ENCODE measurements at regions of chr5 and their contacts with region 1.

Region 1: GRCh38 chr5:151239237-151239861 is 13.6 kb upstream of the GM2A start:
- DNase-seq: peak; percentile 83 to 87
- ATAC-seq: peak; percentile 48 to 89 (median 72)
- H3K4me3 ChIP-seq: peak overlapping the region in 7 of 10 donors; percentile 8 to 41 (median 37)
- H3K27ac ChIP-seq: peak overlapping the region in 9 of 10 donors; percentile 69 to 93 (median 84)
- H3K4me1 ChIP-seq: peaks cover 9 to 41% (median 33%) of the 10 kb centered on the region in 9 donors
- H3K27me3 ChIP-seq: no peaks in the 10 kb centered on the region
- CTCF ChIP-seq: peak; percentile 79 to 95 (median 93)

Region 2: DNA sequence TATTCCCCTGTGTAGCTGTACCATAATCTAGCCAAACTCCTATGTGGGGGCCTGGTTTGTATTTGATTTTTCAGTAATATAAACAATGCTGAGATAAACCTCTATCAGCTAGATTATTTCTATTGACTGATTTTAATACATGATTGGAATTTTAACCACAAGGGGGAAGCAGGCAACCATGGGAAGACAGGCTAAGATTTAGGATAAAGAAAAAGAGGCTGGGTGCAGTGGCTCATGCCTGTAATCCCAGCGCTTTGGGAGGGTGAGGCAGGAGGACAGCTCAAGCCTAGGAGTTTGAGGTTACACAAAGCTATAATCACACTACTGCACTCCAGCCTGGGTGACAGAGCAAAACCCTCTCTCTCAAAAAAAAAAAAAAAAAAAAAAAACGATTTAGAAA is 237.1 kb before region 1 on chr5:
- intact Hi-C with region 1: loop called in 2 of 10 experiments (anchors 5 kb)
- DNase-seq: peak in 1 of 2 donors; percentile 38
- ATAC-seq: peak in 1 of 8 donors; percentile 41
- H3K4me3 ChIP-seq: no peak overlapping the region
- H3K27ac ChIP-seq: no peak overlapping the region
- H3K4me1 ChIP-seq: peaks cover 16 to 42% (median 34%) of the 10 kb centered on the region in 9 donors
- H3K27me3 ChIP-seq: no peaks in the 10 kb centered on the region
- CTCF ChIP-seq: peak; percentile 44 to 75 (median 66)

Region 3: GRCh38 chr5:151063142-151063949 is 176.0 kb before region 1 on chr5:
- intact Hi-C with region 1: loop called in 2 of 10 experiments (anchors 5 to 10 kb)
- DNase-seq: peak in 1 of 2 donors; percentile 60
- ATAC-seq: peak; percentile 53 to 81 (median 74)
- H3K4me3 ChIP-seq: peak overlapping the region in 1 of 10 donors; percentile 3
- H3K27ac ChIP-seq: peak overlapping the region; percentile 78 to 93 (median 88)
- H3K4me1 ChIP-seq: peaks cover 44 to 98% (median 94%) of the 10 kb centered on the region in 9 donors
- H3K27me3 ChIP-seq: no peaks in the 10 kb centered on the region
- CTCF ChIP-seq: no peak

Region 4: DNA sequence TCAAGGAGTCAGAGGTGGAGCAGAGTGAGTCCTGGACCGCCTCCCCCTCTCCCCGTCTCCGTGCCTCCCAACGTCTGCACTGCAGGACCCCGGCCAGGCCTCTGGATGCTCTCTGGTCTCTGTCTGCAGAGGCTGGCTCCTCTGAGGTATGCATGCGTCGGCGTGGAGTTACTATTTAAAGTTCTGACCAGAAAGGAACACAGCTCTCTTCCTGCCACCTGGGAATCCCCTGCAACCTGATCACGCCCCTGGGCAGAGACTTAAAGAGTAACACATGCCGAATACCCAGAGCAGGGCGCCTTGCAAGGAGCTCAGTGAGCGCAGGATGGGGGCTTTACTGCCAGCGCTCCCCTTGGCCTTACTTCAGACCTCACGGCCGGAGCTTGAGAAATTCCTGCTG is 97.8 kb before region 1 on chr5:
- intact Hi-C with region 1: loop called in 1 of 10 experiments (anchors 10 kb)
- DNase-seq: peak in 1 of 2 donors; percentile 53
- ATAC-seq: peak; percentile 70 to 94 (median 82)
- H3K4me3 ChIP-seq: peak overlapping the region in 3 of 10 donors; percentile 0 to 18 (median 14)
- H3K27ac ChIP-seq: peak overlapping the region in 9 of 10 donors; percentile 50 to 81 (median 77)
- H3K4me1 ChIP-seq: peaks cover 19 to 72% (median 63%) of the 10 kb centered on the region in 9 donors
- H3K27me3 ChIP-seq: no peaks in the 10 kb centered on the region
- CTCF ChIP-seq: no peak

Region 5: DNA sequence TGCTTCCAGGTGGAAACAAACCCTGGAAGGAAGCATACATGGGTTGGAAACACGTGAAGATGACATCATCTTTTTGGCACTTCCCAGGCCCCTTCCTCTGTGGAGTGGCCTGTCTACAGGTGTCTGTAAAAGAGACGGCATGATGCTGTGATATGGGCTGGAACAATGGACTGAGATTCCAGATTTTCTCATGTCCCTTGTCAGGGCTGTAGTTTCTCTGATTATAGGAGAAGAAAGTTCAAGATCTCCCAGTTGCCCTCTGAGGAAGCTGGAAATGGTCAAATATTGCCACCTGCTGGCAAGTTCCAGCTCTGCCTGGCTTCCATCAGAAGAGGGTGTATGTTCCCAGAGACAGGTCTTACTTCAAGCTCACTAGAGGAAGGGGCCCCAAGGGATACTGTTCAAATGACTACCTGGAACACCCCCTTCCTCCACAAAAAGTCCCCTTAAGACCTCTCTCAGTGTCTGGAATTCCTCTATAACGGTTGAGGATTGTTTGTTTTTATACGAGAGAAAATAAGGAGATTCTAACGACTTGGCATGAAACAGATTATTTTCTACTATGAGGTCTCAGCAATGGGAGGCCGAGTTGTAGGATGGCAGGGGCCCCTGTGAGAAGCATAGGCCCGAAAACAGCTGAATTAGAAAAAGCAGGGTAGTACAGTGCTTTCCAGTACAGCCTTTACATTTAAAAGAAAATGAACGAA is 74.5 kb before region 1 on chr5:
- intact Hi-C with region 1: loop called in 7 of 10 experiments (anchors 2 to 10 kb)
- DNase-seq: peak; percentile 61 to 84
- ATAC-seq: peak; percentile 82 to 94 (median 91)
- H3K4me3 ChIP-seq: no peak overlapping the region
- H3K27ac ChIP-seq: peak overlapping the region in 3 of 10 donors; percentile 3 to 12 (median 9)
- H3K4me1 ChIP-seq: peaks cover 3 to 21% (median 13%) of the 10 kb centered on the region in 9 donors
- H3K27me3 ChIP-seq: no peaks in the 10 kb centered on the region
- CTCF ChIP-seq: peak; percentile 79 to 99 (median 90)

Region 6: DNA sequence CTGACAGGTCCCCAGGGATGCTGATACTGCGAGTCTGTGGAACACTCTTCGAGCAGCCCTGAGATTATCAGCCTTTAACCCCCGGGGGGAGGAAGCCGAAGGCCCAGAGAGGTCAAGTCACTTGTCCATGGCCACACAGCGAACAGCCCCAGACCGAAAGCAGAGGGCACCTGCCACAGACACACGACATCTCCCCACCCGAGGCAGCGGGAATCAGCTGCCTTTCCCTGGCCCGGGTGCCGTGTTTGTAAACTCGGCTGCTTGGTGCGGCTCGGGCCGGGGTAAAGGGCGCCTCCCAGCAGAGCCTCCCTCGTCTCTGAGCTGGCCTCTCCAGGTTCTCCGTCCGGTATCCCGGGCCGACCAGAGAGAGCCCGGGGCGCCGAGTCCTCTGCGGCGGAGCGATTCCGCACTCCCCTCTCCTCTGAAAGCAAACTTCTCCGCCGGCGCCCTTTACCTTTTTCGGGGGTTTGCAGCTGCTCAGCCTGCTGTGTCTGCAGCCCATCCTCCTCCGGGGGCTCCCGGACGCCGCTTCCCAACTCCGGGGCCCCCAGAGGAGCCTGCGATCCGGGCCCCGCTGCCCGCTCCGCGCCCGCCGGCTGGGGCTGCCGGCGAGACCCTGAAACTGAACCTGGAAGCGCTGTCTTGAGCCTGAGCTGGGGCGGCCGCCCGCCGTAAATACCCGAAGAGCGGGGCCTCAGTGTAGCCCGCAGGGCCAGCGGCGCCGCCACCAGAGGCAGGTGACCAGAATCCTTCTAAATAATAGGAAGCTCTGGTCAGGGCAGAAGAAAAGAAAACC is 15.7 kb before region 1 on chr5 and contains the start of gene CCDC69:
- intact Hi-C with region 1: loop called in 1 of 10 experiments (anchors 2 kb)
- DNase-seq: peak; percentile 80 to 81
- ATAC-seq: peak; percentile 89 to 93 (median 92)
- H3K4me3 ChIP-seq: peak within 1 kb of the TSS; percentile 69 to 98 (median 90)
- H3K27ac ChIP-seq: peak within 1 kb of the TSS; percentile 79 to 97 (median 94)
- H3K4me1 ChIP-seq: peaks cover 13 to 60% (median 48%) of the 10 kb centered on the region in 9 donors
- H3K27me3 ChIP-seq: no peaks in the 10 kb centered on the region
- CTCF ChIP-seq: peak in 7 of 9 donors; percentile 9 to 52 (median 41)
- total RNA-seq, gene CCDC69: 74.9 to 172 (median 104) TPM

Measured in heart right ventricle (tissue), 16 donors.